CD4-positive, alpha-beta memory T cell (primary cell): ENCODE measurements at regions of chr12 and their contacts with region 1.

Region 1: GRCh38 chr12:15522565-15523187 is 200.4 kb downstream of the PTPRO start:
- DNase-seq: peak in 1 of 5 donors; percentile 24
- H3K4me3 ChIP-seq: no peak overlapping the region
- H3K4me3 Mint-ChIP-seq: no peak overlapping the region
- H3K27ac ChIP-seq: no peak overlapping the region
- H3K27ac Mint-ChIP-seq: no peak overlapping the region
- H3K4me1 ChIP-seq: no peaks in the 10 kb centered on the region
- H3K4me1 Mint-ChIP-seq: no peaks in the 10 kb centered on the region
- H3K27me3 ChIP-seq: no peaks in the 10 kb centered on the region
- H3K27me3 Mint-ChIP-seq: peaks cover 10 to 33% of the 10 kb centered on the region in 2 donors

Region 2: GRCh38 chr12:14723763-14724162 is 798.9 kb before region 1 on chr12:
- CTCF ChIA-PET with region 1: no interaction called
- POLR2A ChIA-PET with region 1: no interaction called
- intact Hi-C with region 1: loop called (anchors 10 kb)
- DNase-seq: peak; percentile 49 to 66 (median 62)
- H3K4me3 ChIP-seq: no peak overlapping the region
- H3K4me3 Mint-ChIP-seq: no peak overlapping the region
- H3K27ac ChIP-seq: no peak overlapping the region
- H3K27ac Mint-ChIP-seq: peak overlapping the region in 1 of 7 donors; percentile 15
- H3K4me1 ChIP-seq: no peaks in the 10 kb centered on the region
- H3K4me1 Mint-ChIP-seq: peaks cover 0 to 3% (median 1%) of the 10 kb centered on the region in 4 donors
- H3K27me3 ChIP-seq: no peaks in the 10 kb centered on the region
- H3K27me3 Mint-ChIP-seq: peaks cover 5 to 6% of the 10 kb centered on the region in 2 donors

Region 3: GRCh38 chr12:15276088-15276698 is 246.5 kb before region 1 on chr12:
- CTCF ChIA-PET with region 1: interaction called, 3 read pairs
- POLR2A ChIA-PET with region 1: no interaction called
- intact Hi-C with region 1: loop called (anchors 2 kb)
- DNase-seq: peak in 1 of 5 donors; percentile 0
- H3K4me3 ChIP-seq: no peak overlapping the region
- H3K4me3 Mint-ChIP-seq: no peak overlapping the region
- H3K27ac ChIP-seq: no peak overlapping the region
- H3K27ac Mint-ChIP-seq: no peak overlapping the region
- H3K4me1 ChIP-seq: peaks cover 10% of the 10 kb centered on the region
- H3K4me1 Mint-ChIP-seq: peaks cover 2 to 12% (median 7%) of the 10 kb centered on the region in 4 donors
- H3K27me3 ChIP-seq: no peaks in the 10 kb centered on the region
- H3K27me3 Mint-ChIP-seq: peaks cover 5 to 9% of the 10 kb centered on the region in 2 donors

Region 4: GRCh38 chr12:15728118-15728598 is 205.5 kb after region 1 on chr12:
- CTCF ChIA-PET with region 1: no interaction called
- POLR2A ChIA-PET with region 1: no interaction called
- intact Hi-C with region 1: no loop called
- DNase-seq: no peak
- H3K4me3 ChIP-seq: no peak overlapping the region
- H3K4me3 Mint-ChIP-seq: no peak overlapping the region
- H3K27ac ChIP-seq: no peak overlapping the region
- H3K27ac Mint-ChIP-seq: no peak overlapping the region
- H3K4me1 ChIP-seq: no peaks in the 10 kb centered on the region
- H3K4me1 Mint-ChIP-seq: no peaks in the 10 kb centered on the region
- H3K27me3 ChIP-seq: no peaks in the 10 kb centered on the region
- H3K27me3 Mint-ChIP-seq: peaks cover 0 to 6% of the 10 kb centered on the region in 2 donors

Region 5: GRCh38 chr12:15882118-15882971 is 359.7 kb after region 1 on chr12 and contains the start of gene STRAP:
- CTCF ChIA-PET with region 1: no interaction called
- POLR2A ChIA-PET with region 1: no interaction called
- intact Hi-C with region 1: no loop called
- DNase-seq: peak; percentile 96 to 97 (median 97)
- H3K4me3 ChIP-seq: peak within 1 kb of the TSS; percentile 90 to 98
- H3K4me3 Mint-ChIP-seq: peak within 1 kb of the TSS; percentile 96 to 99 (median 98)
- H3K27ac ChIP-seq: peak within 1 kb of the TSS; percentile 95
- H3K27ac Mint-ChIP-seq: peak within 1 kb of the TSS; percentile 99 to 100 (median 100)
- H3K4me1 ChIP-seq: peaks cover 51% of the 10 kb centered on the region
- H3K4me1 Mint-ChIP-seq: peaks cover 38 to 66% (median 53%) of the 10 kb centered on the region in 4 donors
- H3K27me3 ChIP-seq: no peaks in the 10 kb centered on the region
- H3K27me3 Mint-ChIP-seq: no peaks in the 10 kb centered on the region
- total RNA-seq, gene STRAP: 46.1 to 49.1 TPM